MCF 10A (cell line): ENCODE measurements at regions of chr20 and their contacts with region 1.

Region 1: GRCh38 chr20:20568604-20569205 is 143.7 kb downstream of the RALGAPA2 start:
- DNase-seq: peak; percentile 49
- H3K4me3 Mint-ChIP-seq: no peak overlapping the region
- H3K27ac Mint-ChIP-seq: no peak overlapping the region
- H3K4me1 Mint-ChIP-seq: no peaks in the 10 kb centered on the region
- H3K27me3 Mint-ChIP-seq: no peaks in the 10 kb centered on the region
- CTCF ChIP-seq: peak; percentile 81

Region 2: GRCh38 chr20:20130399-20130798 is 438.3 kb before region 1 on chr20:
- CTCF ChIA-PET with region 1: interaction called, 4 read pairs
- POLR2A ChIA-PET with region 1: no interaction called
- intact Hi-C with region 1: loop called (anchors 2 kb)
- DNase-seq: peak; percentile 38
- H3K4me3 Mint-ChIP-seq: no peak overlapping the region
- H3K27ac Mint-ChIP-seq: peak overlapping the region; percentile 25
- H3K4me1 Mint-ChIP-seq: no peaks in the 10 kb centered on the region
- H3K27me3 Mint-ChIP-seq: no peaks in the 10 kb centered on the region
- CTCF ChIP-seq: peak; percentile 30

Region 3: GRCh38 chr20:20360464-20360863 is 208.2 kb before region 1 on chr20:
- CTCF ChIA-PET with region 1: interaction called, 13 read pairs
- POLR2A ChIA-PET with region 1: no interaction called
- intact Hi-C with region 1: loop called (anchors 1 kb)
- DNase-seq: peak; percentile 70
- H3K4me3 Mint-ChIP-seq: no peak overlapping the region
- H3K27ac Mint-ChIP-seq: no peak overlapping the region
- H3K4me1 Mint-ChIP-seq: peaks cover 22% of the 10 kb centered on the region
- H3K27me3 Mint-ChIP-seq: peaks cover 57% of the 10 kb centered on the region
- CTCF ChIP-seq: peak; percentile 69

Region 4: DNA sequence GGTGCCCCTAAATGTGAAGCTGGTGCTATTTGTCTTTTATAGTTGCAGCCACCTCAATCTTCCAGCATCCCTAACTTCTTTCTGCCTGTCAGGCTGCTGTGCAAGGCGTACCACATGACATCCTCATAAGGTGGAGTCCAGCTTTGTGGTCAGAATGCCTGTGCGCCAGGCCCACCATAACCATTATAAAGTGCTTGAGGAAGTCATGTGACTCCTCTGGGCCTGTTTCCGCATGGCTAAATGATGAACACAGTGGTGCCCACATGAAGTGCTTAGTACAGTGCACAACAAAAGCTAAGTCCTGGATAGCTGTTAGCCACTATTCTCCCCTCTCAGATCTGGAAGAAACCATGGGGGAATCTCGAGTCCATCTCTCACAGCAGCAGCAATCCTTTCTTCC is 125.2 kb before region 1 on chr20:
- CTCF ChIA-PET with region 1: no interaction called
- POLR2A ChIA-PET with region 1: no interaction called
- intact Hi-C with region 1: no loop called
- DNase-seq: no peak
- H3K4me3 Mint-ChIP-seq: no peak overlapping the region
- H3K27ac Mint-ChIP-seq: no peak overlapping the region
- H3K4me1 Mint-ChIP-seq: no peaks in the 10 kb centered on the region
- H3K27me3 Mint-ChIP-seq: no peaks in the 10 kb centered on the region
- CTCF ChIP-seq: no peak

Region 5: GRCh38 chr20:20463933-20464374 is 104.8 kb before region 1 on chr20:
- CTCF ChIA-PET with region 1: no interaction called
- POLR2A ChIA-PET with region 1: no interaction called
- intact Hi-C with region 1: loop called (anchors 2 kb)
- DNase-seq: no peak
- H3K4me3 Mint-ChIP-seq: no peak overlapping the region
- H3K27ac Mint-ChIP-seq: no peak overlapping the region
- H3K4me1 Mint-ChIP-seq: peaks cover 7% of the 10 kb centered on the region
- H3K27me3 Mint-ChIP-seq: no peaks in the 10 kb centered on the region
- CTCF ChIP-seq: no peak